ENCODE measurements at regions of chr15 and their contacts with region 1.

Region 1: GRCh38 chr15:40807028-40807887 is at the starts of genes DNAJC17 and ZFYVE19:
- DNase-seq: peak; percentile 97
- ATAC-seq: peak; percentile 98
- H3K4me3 Mint-ChIP-seq: peak within 1 kb of the TSS; percentile 91
- H3K27ac Mint-ChIP-seq: peak within 1 kb of the TSS; percentile 96
- H3K4me1 Mint-ChIP-seq: peaks cover 19% of the 10 kb centered on the region
- H3K27me3 Mint-ChIP-seq: no peaks in the 10 kb centered on the region
- total RNA-seq, gene DNAJC17: 41.5 to 43.6 TPM
- total RNA-seq, gene ZFYVE19: 27.5 to 33.7 TPM

Region 2: GRCh38 chr15:40382580-40383456 is 424.4 kb before region 1 on chr15 and contains the start of gene KNSTRN:
- CTCF ChIA-PET with region 1: no interaction called
- POLR2A ChIA-PET with region 1: no interaction called
- intact Hi-C with region 1: loop called in 1 of 2 experiments (anchors 1 kb)
- DNase-seq: peak; percentile 97
- ATAC-seq: peak; percentile 100
- H3K4me3 Mint-ChIP-seq: peak within 1 kb of the TSS; percentile 93
- H3K27ac Mint-ChIP-seq: peak within 1 kb of the TSS; percentile 78
- H3K4me1 Mint-ChIP-seq: peaks cover 22% of the 10 kb centered on the region
- H3K27me3 Mint-ChIP-seq: no peaks in the 10 kb centered on the region
- total RNA-seq, gene KNSTRN: 56.2 to 58.8 TPM

Region 3: DNA sequence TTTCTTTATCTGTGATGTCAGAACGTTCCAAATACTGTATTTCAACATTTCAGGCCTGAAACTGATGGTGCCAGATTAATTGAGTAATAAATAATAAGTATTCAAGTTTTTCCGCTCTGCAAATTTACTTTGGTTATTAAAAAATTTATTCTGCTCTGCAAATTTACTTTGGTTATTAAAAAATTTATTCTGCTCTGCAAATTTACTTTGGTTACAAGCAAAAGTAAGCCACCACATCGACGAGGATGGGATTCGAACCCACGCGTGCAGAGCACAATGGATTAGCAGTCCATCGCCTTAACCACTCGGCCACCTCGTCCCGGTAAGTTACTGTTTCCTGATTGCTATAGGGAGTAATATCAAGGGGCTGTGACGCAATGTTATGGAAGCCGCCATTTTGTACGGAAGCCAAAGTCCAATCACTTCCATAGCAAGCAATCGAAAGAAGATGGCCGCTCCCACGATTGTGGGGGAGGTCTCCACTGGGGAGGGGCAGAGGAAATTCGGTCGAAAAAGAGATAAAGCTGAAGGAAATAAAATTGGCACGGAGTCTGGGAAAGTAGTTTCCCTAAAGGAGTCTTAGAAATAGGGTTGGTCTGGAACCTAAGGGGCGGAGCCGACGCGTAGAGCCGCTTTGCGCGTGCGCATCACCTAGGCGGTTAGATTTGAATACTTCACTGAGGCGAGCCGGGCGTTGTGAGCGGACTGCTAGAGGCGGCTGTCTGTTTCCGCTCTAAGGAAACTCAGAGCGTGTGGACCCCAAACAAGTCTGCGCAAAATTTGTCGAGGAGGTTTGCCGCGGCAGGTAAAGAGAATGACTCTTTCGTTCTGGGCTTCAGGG is 213.4 kb before region 1 on chr15 and contains the start of gene KNL1:
- CTCF ChIA-PET with region 1: interaction called, 3 read pairs
- POLR2A ChIA-PET with region 1: no interaction called
- intact Hi-C with region 1: loop called in 1 of 2 experiments (anchors 1 kb)
- DNase-seq: peak; percentile 94
- ATAC-seq: peak; percentile 86
- H3K4me3 Mint-ChIP-seq: peak within 1 kb of the TSS; percentile 87
- H3K27ac Mint-ChIP-seq: peak within 1 kb of the TSS; percentile 95
- H3K4me1 Mint-ChIP-seq: peaks cover 24% of the 10 kb centered on the region
- H3K27me3 Mint-ChIP-seq: peaks cover 6% of the 10 kb centered on the region
- total RNA-seq, gene KNL1: 26.2 to 33.5 TPM

Region 4: GRCh38 chr15:40754883-40755811 is 52.1 kb before region 1 on chr15 and contains the start of gene RMDN3:
- CTCF ChIA-PET with region 1: no interaction called
- POLR2A ChIA-PET with region 1: no interaction called
- intact Hi-C with region 1: loop called (anchors 1 kb)
- DNase-seq: peak; percentile 97
- ATAC-seq: peak; percentile 92
- H3K4me3 Mint-ChIP-seq: peak within 1 kb of the TSS; percentile 91
- H3K27ac Mint-ChIP-seq: peak within 1 kb of the TSS; percentile 99
- H3K4me1 Mint-ChIP-seq: peaks cover 27% of the 10 kb centered on the region
- H3K27me3 Mint-ChIP-seq: no peaks in the 10 kb centered on the region
- total RNA-seq, gene RMDN3: 12.3 to 18.8 TPM

Region 5: GRCh38 chr15:40906091-40906990 is 99.1 kb after region 1 on chr15:
- CTCF ChIA-PET with region 1: no interaction called
- POLR2A ChIA-PET with region 1: no interaction called
- intact Hi-C with region 1: no loop called
- DNase-seq: peak; percentile 91
- ATAC-seq: peak; percentile 81
- H3K4me3 Mint-ChIP-seq: peak overlapping the region; percentile 69
- H3K27ac Mint-ChIP-seq: peak overlapping the region; percentile 82
- H3K4me1 Mint-ChIP-seq: peaks cover 27% of the 10 kb centered on the region
- H3K27me3 Mint-ChIP-seq: no peaks in the 10 kb centered on the region

Region 6: DNA sequence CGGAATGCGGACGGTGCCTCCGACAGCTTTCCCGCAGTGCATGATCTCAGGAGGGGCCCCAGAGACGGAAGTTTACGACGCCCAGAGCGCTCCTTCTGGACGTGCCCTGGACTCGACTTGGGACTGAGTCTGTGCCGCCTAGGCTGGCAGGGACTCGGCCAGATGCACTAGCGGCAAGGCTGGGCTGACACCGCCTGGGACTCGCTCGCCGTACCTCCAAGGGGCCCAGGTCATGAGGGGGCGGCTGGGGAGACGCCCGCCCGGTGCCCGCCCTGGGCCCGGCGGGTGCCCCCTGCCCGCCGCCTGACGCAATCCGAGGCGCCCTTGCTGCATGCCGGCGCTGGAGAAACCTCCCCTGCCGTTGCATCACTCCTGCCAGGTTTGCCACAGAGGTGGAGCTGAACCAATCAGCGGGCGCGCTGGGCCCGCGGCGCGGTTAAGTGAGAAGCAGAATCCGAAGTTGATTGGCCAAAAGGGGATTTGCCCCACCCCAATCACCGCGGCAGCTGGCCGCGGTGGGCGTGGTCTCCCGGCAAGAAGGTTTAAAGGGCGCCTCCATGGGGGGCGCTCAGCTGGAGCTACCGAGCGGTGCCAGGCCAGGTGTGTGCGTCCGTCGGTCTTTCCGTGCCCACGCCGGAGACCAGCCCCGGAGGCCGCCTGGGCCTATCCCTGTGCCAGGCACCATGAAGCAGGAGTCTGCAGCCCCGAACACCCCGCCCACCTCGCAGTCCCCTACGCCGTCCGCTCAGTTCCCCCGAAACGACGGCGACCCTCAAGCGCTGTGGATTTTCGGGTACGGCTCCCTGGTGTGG is 145.8 kb after region 1 on chr15 and contains the start of gene CHAC1:
- CTCF ChIA-PET with region 1: no interaction called
- POLR2A ChIA-PET with region 1: no interaction called
- intact Hi-C with region 1: loop called in 1 of 2 experiments (anchors 1 kb)
- DNase-seq: peak; percentile 99
- ATAC-seq: peak; percentile 92
- H3K4me3 Mint-ChIP-seq: peak within 1 kb of the TSS; percentile 93
- H3K27ac Mint-ChIP-seq: peak within 1 kb of the TSS; percentile 97
- H3K4me1 Mint-ChIP-seq: peaks cover 25% of the 10 kb centered on the region
- H3K27me3 Mint-ChIP-seq: peaks cover 2% of the 10 kb centered on the region
- total RNA-seq, gene CHAC1: 31.1 to 32.2 TPM

Region 7: GRCh38 chr15:41660235-41661077 is 853.2 kb after region 1 on chr15 and contains the start of gene MGA:
- CTCF ChIA-PET with region 1: no interaction called
- POLR2A ChIA-PET with region 1: no interaction called
- intact Hi-C with region 1: loop called in 1 of 2 experiments (anchors 1 kb)
- DNase-seq: peak; percentile 94
- ATAC-seq: peak; percentile 89
- H3K4me3 Mint-ChIP-seq: peak within 1 kb of the TSS; percentile 92
- H3K27ac Mint-ChIP-seq: peak within 1 kb of the TSS; percentile 95
- H3K4me1 Mint-ChIP-seq: peaks cover 42% of the 10 kb centered on the region
- H3K27me3 Mint-ChIP-seq: peaks cover 7% of the 10 kb centered on the region
- total RNA-seq, gene MGA: 33.7 to 39.3 TPM